Spleen (tissue), 13 donors: ENCODE measurements at regions of chr12 and their contacts with region 1.

Region 1: DNA sequence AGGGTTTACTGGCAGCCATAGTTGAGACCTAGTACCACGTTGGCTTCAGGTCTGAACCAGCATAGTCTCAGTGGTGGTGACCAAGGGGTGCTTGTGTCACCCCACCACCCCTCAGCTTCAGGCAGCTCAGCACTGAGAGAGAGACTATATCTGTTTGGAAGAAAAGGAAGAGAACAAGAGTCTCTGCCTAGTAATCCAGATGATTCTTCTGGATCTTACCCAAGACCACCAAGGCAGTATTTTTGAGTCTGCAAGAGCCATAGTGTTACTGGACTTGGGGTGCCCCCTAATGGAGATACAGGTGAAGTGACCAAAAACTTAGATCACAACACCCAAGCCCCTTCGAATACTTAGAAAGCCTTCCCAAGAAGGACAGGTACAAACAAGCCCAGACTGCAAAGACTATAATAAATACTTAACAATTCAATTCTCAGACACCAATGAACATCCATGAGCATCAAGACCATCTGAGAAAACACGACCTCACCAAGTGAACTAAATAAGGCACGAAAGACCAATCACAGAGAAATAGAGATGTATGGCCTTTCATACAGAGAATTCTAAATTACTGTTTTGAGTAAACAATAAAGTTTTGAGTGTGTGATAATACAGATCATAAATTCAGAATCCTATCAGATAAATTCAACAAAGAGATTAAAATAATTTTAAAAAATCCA is 107.0 kb downstream of the HELB start:
- DNase-seq: no peak
- H3K4me3 ChIP-seq: no peak overlapping the region
- H3K27ac ChIP-seq: peak overlapping the region in 1 of 8 donors; percentile 36
- H3K4me1 ChIP-seq: peaks cover 0 to 13% (median 3%) of the 10 kb centered on the region in 6 donors
- H3K27me3 ChIP-seq: no peaks in the 10 kb centered on the region
- CTCF ChIP-seq: peak in 9 of 11 experiments; percentile 21 to 76 (median 65)
- POLR2A ChIP-seq: no peak

Region 2: DNA sequence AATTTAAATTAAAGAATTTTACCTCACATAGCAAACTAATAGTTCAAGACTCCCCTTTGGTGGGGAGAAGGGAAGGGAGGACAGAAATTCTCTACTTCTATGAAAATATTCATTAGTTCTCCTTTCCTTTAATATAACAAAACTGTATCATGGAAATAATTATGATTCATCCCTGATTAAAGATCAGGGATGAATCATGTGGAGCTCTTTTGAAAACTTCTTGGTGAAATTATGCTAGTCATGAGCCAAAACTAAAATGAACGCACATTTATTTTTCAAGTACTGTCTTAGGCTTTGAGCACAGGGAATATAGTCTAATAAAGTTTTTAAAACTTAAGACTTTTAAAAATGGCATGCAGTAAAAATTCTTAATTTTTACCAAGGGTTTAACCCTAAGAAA is 256.6 kb before region 1 on chr12:
- intact Hi-C with region 1: no loop called
- DNase-seq: no peak
- H3K4me3 ChIP-seq: no peak overlapping the region
- H3K27ac ChIP-seq: no peak overlapping the region
- H3K4me1 ChIP-seq: peaks cover 0 to 38% (median 5%) of the 10 kb centered on the region in 6 donors
- H3K27me3 ChIP-seq: no peaks in the 10 kb centered on the region
- CTCF ChIP-seq: no peak
- POLR2A ChIP-seq: no peak

Region 3: GRCh38 chr12:66269757-66270383 is 139.5 kb before region 1 on chr12:
- intact Hi-C with region 1: loop called (anchors 5 kb)
- DNase-seq: no peak
- H3K4me3 ChIP-seq: no peak overlapping the region
- H3K27ac ChIP-seq: peak overlapping the region in 5 of 8 donors; percentile 51 to 87 (median 68)
- H3K4me1 ChIP-seq: peaks cover 0 to 38% (median 16%) of the 10 kb centered on the region in 6 donors
- H3K27me3 ChIP-seq: no peaks in the 10 kb centered on the region
- CTCF ChIP-seq: peak; percentile 23 to 73 (median 56)
- POLR2A ChIP-seq: no peak